ENCODE measurements at regions of chr7 and their contacts with region 1.

Region 1: DNA sequence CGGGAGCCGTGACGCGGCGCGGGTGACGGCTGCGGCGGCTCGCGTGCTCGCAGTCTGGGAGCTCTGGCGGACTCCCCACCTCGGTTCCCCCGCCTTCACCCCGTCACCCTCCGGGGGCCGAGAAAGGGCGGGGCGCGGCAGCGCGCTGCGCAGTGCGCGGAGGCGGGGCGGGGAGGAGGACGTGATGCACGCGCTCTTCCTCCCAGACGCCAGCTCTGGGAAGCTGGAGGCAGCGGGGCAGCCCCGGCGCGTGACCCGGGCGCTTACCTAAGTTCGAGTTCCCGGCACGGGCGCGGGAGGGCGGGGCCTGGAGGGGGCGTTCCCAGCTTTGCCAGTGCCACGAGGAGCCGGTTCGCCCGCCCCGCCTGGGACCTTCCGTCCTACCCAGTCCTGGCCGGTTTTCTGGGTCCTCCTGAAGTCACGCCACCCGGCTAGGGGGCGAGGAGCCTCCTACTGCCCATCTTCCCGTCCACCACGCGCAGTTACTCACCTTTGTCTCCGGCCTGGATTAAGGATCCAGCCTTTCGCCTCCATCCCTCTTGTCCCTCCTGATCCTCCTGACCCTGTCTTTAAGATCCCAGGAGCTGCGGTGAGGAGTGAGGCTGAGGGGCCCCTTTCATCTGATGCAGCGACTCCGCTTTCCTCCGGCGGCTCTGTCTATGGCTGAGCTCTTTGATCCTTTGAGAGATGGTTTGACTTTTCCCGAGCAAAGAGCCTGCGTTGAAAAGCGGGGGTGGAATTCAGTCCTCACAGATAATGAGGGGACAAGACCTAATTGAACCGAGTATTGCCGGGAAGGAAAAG is 470 bp upstream of the NAMPT start:
- DNase-seq: peak; percentile 94 to 100
- H3K4me3 ChIP-seq: peak overlapping the region; percentile 91
- H3K27ac ChIP-seq: peak overlapping the region; percentile 99
- H3K4me1 ChIP-seq: peaks cover 45% of the 10 kb centered on the region
- H3K27me3 ChIP-seq: no peaks in the 10 kb centered on the region
- CTCF ChIP-seq: no peak

Region 2: DNA sequence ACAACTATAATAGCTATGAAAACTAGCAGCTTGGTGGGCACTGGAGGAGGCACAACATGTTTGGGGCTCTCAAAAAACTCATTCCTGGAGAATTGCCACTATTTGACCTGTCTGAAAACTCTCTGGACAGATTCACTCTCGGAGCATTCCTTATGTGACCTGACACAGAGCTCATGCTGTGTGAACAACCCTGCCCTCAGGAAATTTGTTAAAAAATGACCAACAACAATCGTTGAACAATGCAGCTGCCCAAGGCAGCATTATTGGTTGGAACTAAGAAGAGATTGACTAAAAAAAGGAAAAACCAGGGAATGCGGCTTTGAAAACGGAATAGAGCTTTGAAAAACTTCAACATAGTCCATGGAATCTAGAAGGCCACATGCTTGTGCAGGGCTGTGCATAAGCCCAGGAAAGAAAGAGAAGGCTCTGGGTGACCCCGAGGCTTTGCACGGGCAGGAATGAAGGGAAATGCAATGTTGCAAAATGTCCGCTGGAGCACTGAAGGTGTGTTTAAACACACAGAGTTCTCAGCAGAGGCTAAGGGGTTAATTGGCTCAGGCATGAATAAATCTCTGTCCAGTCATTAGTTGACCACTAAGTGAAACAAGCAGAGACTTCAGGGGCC is 53.3 kb before region 1 on chr7:
- CTCF ChIA-PET with region 1: no interaction called
- POLR2A ChIA-PET with region 1: no interaction called
- intact Hi-C with region 1: no loop called
- DNase-seq: no peak
- H3K4me3 ChIP-seq: no peak overlapping the region
- H3K27ac ChIP-seq: no peak overlapping the region
- H3K4me1 ChIP-seq: no peaks in the 10 kb centered on the region
- H3K27me3 ChIP-seq: no peaks in the 10 kb centered on the region
- CTCF ChIP-seq: no peak

Region 3: DNA sequence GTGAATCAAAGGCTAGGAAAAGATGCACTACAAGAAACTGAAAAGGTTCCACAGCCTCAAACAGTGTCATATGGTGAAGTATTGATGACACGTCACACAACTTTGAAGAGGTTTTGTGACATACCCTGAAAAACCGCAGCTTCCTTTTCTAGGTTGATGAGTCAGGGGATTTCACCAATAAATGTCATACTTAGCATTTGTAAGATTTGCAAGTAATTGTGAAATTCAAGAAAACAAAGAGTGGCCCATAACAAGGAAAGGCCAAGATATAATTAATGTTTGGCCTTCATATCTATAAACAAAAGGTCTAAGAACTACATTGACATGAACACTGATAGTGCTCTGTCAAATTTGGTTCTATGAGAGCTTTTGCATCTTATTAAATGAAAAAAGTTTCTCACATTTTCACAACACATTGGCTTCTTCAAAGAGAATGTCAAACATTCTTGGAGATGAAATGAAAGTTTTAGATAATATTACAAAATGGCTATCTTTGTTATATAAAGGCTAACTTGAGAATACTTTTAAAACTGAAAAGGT is 61.5 kb after region 1 on chr7:
- CTCF ChIA-PET with region 1: no interaction called
- POLR2A ChIA-PET with region 1: interaction called, 6 read pairs
- intact Hi-C with region 1: loop called (anchors 1 kb)
- DNase-seq: peak; percentile 24 to 96
- H3K4me3 ChIP-seq: peak overlapping the region; percentile 41; the same call in 1 of the 2 replicates
- H3K27ac ChIP-seq: peak overlapping the region; percentile 98
- H3K4me1 ChIP-seq: peaks cover 38% of the 10 kb centered on the region
- H3K27me3 ChIP-seq: no peaks in the 10 kb centered on the region
- CTCF ChIP-seq: no peak

Region 4: DNA sequence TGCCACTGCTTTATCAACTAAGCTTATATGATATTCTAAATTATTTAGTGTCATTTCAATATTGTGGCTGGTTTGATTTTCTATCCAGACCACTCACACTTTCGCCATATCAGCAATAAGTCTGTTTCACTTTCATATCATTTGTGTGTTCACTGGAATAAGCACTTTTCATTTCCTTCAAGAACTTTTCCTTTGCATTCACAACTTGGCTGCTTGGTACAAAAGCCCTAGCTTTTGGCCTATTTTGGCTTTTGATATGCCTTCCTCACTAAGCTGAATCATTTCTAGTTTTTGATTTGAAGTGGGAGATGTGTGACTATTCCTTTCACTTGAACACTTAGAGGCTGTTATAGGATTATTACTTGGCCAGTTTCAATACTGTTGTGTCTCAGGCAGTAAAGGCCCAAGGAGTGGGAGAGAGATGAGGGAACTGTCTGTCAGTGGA is 120.5 kb after region 1 on chr7:
- CTCF ChIA-PET with region 1: no interaction called
- POLR2A ChIA-PET with region 1: interaction called, 10 read pairs
- intact Hi-C with region 1: no loop called
- DNase-seq: no peak
- H3K4me3 ChIP-seq: no peak overlapping the region
- H3K27ac ChIP-seq: no peak overlapping the region
- H3K4me1 ChIP-seq: no peaks in the 10 kb centered on the region
- H3K27me3 ChIP-seq: no peaks in the 10 kb centered on the region
- CTCF ChIP-seq: no peak

Region 5: DNA sequence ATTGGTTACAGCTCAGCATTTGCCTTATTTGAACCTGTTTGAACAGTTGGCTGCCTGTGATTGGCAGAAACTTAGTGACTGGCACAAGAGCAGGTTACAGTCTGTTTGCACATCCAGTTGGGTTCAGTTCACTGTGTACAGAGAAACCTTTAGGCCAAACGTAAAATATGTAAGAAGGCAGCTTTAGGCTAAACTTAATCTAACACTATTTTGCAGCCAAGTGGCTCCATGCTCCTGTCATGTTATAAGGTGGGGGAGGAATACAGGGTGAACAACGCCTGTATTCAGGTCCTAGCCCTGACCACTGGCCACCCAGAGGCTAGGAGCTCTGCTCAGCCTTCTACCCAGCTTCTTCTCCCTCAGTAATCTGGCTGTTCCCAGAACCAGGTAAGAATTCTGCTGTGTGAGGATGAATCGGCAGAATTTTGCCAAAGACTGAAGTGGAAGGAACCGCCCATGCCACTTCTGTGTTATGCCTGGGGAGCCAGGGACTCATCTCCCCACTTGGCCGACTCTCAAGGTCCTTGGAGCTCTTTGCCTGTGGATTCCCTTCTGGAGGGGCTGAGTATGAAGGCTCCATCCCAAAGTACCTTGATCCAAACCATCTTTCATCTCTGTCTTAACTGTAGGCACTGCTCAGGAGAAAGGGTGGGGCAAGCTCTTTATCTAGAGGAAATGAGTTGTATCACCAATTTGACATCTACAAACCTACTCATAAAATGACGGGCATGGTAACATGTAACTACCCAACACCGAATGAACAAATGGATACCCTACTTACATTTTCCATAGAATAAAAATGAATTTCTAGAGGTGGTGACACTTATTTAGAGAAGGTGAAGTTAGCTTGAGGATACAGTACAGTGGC is 164.0 kb after region 1 on chr7:
- CTCF ChIA-PET with region 1: interaction called, 3 read pairs
- POLR2A ChIA-PET with region 1: interaction called, 21 read pairs
- intact Hi-C with region 1: no loop called
- DNase-seq: peak; percentile 59 to 68
- H3K4me3 ChIP-seq: no peak overlapping the region
- H3K27ac ChIP-seq: peak overlapping the region; percentile 95
- H3K4me1 ChIP-seq: peaks cover 35% of the 10 kb centered on the region
- H3K27me3 ChIP-seq: no peaks in the 10 kb centered on the region
- CTCF ChIP-seq: no peak

Region 6: GRCh38 chr7:106659963-106660861 is 375.0 kb after region 1 on chr7:
- CTCF ChIA-PET with region 1: no interaction called
- POLR2A ChIA-PET with region 1: interaction called, 4 read pairs
- intact Hi-C with region 1: loop called (anchors 5 kb)
- DNase-seq: peak; percentile 54 to 86
- H3K4me3 ChIP-seq: peak overlapping the region; percentile 81
- H3K27ac ChIP-seq: peak overlapping the region; percentile 71
- H3K4me1 ChIP-seq: peaks cover 19% of the 10 kb centered on the region
- H3K27me3 ChIP-seq: no peaks in the 10 kb centered on the region
- CTCF ChIP-seq: peak; percentile 77

Measured in PC-9 (cell line).